ENCODE measurements at regions of chr12 and their contacts with region 1.

Region 1: DNA sequence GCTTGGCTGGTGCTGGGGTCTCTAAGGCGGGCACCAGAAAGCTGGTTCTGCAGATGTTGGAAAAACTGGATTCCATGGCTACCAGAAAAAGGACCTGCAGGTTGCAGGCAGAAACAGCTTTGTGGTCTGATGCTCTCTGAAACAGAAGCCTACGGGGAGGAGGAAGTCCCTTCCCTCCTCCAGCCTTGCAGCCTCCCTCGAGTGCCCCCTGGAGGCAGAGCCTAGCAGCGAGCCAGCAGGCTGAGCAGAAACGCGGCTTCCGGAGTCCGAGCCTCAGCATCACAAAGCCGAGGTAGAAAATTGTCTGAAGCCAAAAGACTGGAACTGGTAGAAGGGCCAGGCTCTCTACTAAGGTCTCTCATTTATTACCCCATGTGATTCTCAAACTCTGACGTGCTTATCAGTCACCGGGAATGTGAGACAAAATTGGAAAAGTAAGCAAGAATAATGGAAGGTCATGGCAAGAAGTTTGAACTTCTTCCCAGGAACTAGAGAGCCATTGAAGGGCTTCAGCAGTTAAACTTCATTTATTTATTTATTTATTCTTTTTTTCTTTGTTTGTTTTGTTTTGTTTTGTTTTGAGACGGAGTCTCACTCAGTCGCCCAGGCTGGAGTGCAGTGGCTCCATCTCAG is 82.2 kb upstream of the CPSF6 start:
- DNase-seq: peak; percentile 79 to 85
- ATAC-seq: peak; percentile 61 to 93 (median 84)
- H3K4me3 ChIP-seq: peak overlapping the region in 2 of 10 donors; percentile 12 to 27
- H3K27ac ChIP-seq: no peak overlapping the region
- H3K4me1 ChIP-seq: peaks cover 0 to 9% (median 0%) of the 10 kb centered on the region in 9 donors
- H3K27me3 ChIP-seq: no peaks in the 10 kb centered on the region
- CTCF ChIP-seq: peak; percentile 70 to 99 (median 91)

Region 2: DNA sequence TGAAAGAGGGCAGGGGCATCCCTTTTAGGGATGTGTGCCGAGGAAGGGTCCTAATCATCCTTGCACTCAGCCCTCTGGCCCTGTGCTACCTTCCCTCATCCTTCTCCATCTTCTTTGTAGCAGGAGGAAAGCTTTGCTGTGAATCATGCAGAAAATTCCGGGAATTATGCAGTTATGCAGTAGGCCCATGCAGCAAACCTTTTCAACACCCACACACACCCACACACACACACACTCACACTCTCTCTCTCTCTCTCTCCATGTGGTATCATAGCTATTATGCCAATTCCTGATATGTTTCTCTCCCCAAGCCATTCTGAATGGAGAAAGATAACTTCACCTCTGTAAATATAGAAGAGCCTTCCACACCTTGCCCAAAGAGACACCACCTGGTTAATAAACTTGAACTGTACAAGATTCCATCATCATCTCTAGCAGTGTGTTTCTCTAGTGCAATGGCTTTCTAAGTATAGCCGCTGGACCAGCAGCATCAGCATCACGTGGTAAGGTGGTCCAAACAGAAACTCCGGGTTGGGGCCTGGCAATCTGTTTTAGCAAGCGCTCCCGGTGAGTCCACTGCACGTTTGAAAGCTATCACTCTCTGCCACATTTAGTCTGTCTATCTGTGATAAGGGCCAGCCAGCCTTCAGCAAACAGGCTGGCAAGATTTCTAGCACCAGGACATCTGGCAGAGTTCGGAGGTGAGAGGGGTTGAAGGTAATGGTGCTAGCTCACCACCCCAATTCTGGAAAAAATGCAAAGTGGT is 291.6 kb before region 1 on chr12:
- intact Hi-C with region 1: loop called in 2 of 10 experiments (anchors 5 to 10 kb)
- DNase-seq: no peak
- ATAC-seq: no peak
- H3K4me3 ChIP-seq: no peak overlapping the region
- H3K27ac ChIP-seq: no peak overlapping the region
- H3K4me1 ChIP-seq: no peaks in the 10 kb centered on the region
- H3K27me3 ChIP-seq: no peaks in the 10 kb centered on the region
- CTCF ChIP-seq: no peak

Region 3: GRCh38 chr12:68871921-68872320 is 285.2 kb before region 1 on chr12:
- intact Hi-C with region 1: loop called in 1 of 10 experiments (anchors 10 kb)
- DNase-seq: no peak
- ATAC-seq: no peak
- H3K4me3 ChIP-seq: no peak overlapping the region
- H3K27ac ChIP-seq: no peak overlapping the region
- H3K4me1 ChIP-seq: peaks cover 0 to 9% (median 0%) of the 10 kb centered on the region in 9 donors
- H3K27me3 ChIP-seq: peaks cover 0 to 3% (median 0%) of the 10 kb centered on the region in 7 donors
- CTCF ChIP-seq: peak in 2 of 9 donors; percentile 4 to 12

Region 4: GRCh38 chr12:69254046-69254445 is 96.9 kb after region 1 on chr12:
- intact Hi-C with region 1: loop called (anchors 1 to 10 kb)
- DNase-seq: no peak
- ATAC-seq: peak in 5 of 8 donors; percentile 31 to 57 (median 48)
- H3K4me3 ChIP-seq: no peak overlapping the region
- H3K27ac ChIP-seq: no peak overlapping the region
- H3K4me1 ChIP-seq: peaks cover 0 to 33% (median 17%) of the 10 kb centered on the region in 9 donors
- H3K27me3 ChIP-seq: no peaks in the 10 kb centered on the region
- CTCF ChIP-seq: peak; percentile 36 to 77 (median 69)

Region 5: GRCh38 chr12:69359531-69360347 is 202.6 kb after region 1 on chr12 and contains the start of gene YEATS4:
- intact Hi-C with region 1: loop called in 1 of 10 experiments (anchors 10 kb)
- DNase-seq: peak; percentile 82 to 87
- ATAC-seq: peak; percentile 97 to 99 (median 98)
- H3K4me3 ChIP-seq: peak within 1 kb of the TSS; percentile 71 to 100 (median 84)
- H3K27ac ChIP-seq: peak within 1 kb of the TSS; percentile 87 to 99 (median 95)
- H3K4me1 ChIP-seq: peaks cover 0 to 26% (median 12%) of the 10 kb centered on the region in 9 donors
- H3K27me3 ChIP-seq: no peaks in the 10 kb centered on the region
- CTCF ChIP-seq: no peak
- total RNA-seq, gene YEATS4: 7.4 to 13.1 (median 9.5) TPM